ENCODE measurements at regions of chr6 and their contacts with region 1.

Region 1: DNA sequence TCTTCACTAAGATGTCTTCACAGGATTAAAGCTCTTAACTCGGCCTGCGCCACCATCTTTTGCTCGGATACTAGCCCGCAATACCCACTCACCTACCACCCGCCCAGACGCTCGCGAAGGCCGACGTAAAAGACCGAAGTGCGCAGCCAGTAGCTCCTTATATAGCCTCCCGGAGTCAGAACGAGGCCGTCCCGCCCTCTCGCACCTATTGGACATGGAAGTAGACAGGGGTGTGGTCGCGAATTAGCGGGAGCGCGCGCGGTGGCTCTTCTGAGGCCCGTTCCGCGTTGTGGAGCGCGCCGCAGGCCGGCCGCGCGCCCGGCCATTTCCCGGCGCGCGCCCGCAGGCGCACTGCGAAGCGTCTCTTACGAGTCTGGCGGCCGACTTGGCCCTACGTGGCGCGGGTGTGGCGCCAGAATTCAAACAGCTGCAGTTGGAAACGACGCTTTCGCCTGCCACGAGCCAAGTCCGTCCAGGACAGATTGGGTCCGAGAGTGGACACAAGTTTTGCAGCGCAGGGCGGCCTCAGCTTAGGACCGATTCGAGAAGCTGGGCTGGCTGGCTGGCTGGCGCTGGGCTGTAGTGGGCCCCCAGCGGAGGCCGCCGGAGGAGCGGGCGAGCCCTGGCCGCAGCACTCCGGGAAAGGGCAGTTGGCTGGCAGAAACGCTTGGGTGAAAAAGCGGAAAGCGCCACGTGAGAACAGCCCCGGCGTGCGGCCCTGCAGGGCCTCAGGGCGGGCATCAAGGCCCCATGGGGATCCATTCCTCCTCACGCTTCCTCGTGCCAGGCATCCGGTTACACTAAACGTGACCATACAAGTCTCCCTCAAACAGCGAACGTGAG is 36.1 kb upstream of the SYNCRIP start:
- DNase-seq: peak; percentile 96 to 98
- ATAC-seq: peak; percentile 95

Region 2: DNA sequence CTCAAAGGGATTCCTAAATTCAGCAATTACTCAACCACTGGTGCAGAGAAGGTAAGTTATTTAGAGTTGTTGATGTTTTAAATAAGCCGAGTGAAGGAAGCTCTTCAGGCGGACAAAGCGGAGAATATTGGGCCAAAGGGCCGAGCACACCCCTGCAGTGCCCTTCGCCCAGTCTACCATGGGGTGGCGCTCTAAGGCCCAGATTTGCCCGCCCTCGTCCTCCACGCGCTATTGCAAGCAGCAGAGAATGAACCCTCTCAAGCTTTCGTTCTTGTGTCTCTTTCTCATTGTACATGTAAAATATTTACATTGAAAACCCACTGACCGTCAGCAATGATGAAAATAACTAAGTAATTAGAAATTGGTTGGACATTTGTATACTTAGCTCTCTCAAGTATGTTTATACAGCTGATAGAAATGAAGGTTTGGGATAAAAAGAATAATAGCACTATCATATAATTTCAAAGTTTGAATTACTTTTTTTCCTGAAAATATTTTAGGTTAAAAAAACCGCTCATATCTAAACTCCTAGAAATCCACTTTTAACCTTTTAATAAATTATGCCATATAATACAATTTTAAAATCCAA is 1256.3 kb before region 1 on chr6:
- intact Hi-C with region 1: no loop called
- DNase-seq: peak in 1 of 2 donors; percentile 5
- ATAC-seq: peak; percentile 40

Region 3: DNA sequence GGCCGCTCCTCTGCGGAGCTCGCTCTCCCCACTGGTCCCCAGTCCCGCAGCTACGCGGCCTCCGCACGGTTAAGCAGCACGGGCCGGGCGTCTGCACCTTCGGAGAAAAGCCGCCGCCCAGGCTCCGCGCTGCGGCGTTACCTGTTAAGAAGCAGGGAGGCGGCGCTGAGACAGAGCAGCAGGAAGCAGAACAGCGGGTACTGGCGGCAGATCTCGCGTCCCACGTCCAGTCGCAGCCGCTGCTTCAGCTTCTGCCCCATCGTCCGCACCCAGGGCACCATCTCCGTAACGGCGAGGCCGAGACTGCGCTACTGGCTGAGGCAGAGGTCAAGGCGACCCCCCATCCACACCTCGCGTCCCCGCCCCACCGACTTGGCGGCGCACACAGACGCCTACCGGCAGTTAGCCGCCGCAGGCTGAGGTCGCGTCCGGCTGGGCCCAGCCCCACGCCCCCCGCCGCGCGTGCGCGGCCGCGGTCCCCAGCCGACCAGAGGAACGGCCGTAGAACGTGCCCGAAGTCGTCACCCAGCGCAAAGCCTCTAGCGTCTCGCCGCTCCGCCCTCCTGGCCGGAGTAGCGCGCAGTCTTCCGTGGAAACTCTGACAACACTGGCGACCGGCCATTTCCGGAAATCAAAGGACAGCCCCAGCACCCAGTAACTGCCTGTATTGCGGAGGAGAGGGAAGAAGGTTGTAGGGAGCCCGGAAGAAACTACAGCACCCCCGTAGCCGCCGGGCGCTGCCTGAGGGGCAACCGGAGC is 85.2 kb before region 1 on chr6 and contains the start of gene SNX14:
- intact Hi-C with region 1: loop called in 1 of 2 experiments (anchors 10 kb)
- DNase-seq: peak; percentile 96
- ATAC-seq: peak; percentile 88
- total RNA-seq, gene SNX14: 71.0 to 84.5 TPM

Region 4: DNA sequence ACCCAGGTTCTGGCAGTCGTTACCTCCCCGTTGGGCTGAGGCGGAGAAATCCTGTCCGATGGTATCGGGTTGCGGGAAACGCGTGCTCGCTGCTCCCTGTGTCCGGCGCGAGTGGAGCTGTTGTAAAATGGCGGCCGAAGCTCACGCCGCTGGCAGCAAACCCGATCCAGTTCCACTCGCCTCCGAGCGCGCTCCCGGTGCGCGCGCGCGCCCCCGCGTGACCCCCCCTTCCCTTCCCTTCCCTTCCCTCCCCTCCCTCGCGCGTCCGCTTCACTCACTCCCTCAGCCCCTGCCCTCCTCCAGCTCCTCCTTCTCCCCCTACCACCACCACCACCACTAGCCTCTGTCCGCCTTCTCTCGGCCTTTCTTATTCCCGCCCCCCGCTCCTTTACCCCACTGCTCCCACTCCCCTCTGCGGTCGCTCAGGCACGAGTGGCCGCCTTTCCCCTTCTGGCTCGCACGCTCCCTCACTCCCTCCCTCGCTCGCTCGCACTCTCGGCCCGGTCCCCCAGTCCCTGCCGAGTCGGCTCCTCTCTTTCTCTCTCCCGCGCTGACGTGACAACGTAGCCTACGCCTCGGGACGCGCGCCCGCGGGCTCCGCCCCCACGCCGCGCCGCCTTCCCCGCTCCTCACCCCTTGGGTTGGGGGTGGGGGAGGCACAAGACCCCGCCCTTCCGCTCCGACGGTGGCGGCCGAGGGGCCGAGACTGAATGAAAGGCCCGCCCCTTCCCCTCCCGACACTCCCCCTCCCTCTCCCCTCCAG is 35.9 kb before region 1 on chr6 and contains the start of gene SYNCRIP:
- intact Hi-C with region 1: loop called in 1 of 2 experiments (anchors 2 kb)
- DNase-seq: peak; percentile 98 to 99
- ATAC-seq: peak; percentile 80
- total RNA-seq, gene SYNCRIP: 62.2 to 76.8 TPM

Measured in left colon (tissue), 2 donors.